ENCODE measurements at regions of chr11 and their contacts with region 1.

Region 1: DNA sequence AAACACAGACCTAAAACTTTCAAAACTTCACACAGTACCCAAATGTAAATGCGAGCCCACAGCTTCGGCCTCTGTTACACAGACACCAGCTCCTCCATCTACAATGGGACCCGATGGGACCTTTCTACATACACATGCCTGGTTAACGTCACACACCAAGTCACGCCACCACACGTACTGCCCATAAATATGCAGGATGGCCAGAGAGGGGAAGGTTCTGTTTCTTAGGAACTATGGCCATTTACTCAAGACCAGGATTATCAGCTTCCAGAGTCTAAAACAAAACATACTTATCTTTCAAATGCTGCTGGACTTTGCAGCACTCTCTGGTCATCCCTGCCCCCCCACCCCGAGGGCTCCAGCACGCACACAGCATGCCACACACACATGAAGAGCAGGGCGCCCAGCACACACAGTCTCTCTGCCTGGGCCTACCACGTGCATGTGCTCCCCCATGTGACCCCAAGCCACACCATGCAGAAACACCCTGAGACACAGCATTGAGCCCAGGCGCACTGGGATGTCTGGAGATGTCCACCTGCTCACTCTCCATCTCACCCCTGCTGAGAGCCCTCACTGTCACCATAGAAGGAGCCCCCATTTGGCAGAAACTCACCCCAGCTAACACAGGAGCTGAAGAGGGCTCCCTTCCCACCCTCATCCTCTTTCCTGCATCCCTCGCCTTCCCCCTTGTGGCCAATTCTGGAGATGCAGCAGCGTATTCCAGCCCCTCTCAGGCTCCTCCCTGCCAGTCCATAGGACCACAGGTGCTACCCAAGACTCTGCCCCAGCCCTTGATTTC is 61.8 kb downstream of the SLC22A12 start:
- DNase-seq: peak; percentile 75 to 92 (median 90)
- ATAC-seq: peak; percentile 72 to 77
- H3K4me3 ChIP-seq: no peak overlapping the region
- H3K27ac ChIP-seq: no peak overlapping the region
- H3K4me1 ChIP-seq: no peaks in the 10 kb centered on the region
- H3K27me3 ChIP-seq: no peaks in the 10 kb centered on the region

Region 2: DNA sequence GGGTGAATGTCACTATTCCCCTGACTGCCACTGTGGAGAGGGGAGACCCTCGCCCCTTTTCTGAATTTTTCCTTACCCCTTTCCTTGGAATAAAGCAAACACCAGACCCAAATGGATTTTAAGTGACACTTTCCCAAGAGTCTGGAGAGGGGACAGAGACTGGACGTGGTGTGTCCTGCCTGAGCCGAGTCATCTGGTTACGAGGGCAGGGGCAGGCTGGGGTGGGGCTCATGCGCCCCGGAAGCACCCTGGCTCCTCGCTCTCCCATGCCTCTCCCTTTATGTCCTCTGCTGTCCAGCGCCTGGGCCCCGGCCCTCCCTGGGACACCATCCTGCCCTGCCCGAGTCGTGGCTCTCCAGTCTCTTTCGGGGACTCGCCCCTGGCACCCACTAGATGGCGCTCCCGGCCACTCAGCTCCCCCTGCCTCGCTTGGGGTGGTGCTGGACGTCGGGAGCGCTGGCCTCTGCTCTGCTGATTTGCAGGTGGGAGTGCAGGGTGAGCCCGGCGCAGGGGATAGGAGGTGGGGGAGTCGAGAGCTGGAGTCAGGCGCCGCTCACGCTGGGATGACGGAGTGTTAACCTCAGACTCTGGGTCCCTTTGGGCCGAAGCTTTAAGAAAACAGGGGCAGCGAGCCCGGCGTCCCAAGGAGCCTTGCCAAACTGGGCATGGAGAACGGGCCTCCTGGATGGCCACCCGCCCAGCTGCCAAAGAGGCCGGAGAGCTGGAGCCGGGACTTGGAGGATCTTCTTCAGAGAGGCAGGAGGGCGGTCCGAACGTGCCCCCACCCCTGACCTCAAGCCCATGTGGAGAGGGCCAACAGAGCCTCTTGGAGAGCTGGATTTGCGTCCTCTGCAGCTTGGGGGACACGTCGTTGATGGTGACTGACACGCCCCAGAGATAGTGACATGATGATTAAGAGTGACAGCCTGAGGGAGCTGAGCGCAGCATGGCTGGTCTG is 203.9 kb before region 1 on chr11:
- intact Hi-C with region 1: loop called (anchors 2 to 10 kb)
- DNase-seq: peak; percentile 83 to 94 (median 94)
- ATAC-seq: peak; percentile 95 to 97
- H3K4me3 ChIP-seq: no peak overlapping the region
- H3K27ac ChIP-seq: no peak overlapping the region
- H3K4me1 ChIP-seq: no peaks in the 10 kb centered on the region
- H3K27me3 ChIP-seq: no peaks in the 10 kb centered on the region

Region 3: DNA sequence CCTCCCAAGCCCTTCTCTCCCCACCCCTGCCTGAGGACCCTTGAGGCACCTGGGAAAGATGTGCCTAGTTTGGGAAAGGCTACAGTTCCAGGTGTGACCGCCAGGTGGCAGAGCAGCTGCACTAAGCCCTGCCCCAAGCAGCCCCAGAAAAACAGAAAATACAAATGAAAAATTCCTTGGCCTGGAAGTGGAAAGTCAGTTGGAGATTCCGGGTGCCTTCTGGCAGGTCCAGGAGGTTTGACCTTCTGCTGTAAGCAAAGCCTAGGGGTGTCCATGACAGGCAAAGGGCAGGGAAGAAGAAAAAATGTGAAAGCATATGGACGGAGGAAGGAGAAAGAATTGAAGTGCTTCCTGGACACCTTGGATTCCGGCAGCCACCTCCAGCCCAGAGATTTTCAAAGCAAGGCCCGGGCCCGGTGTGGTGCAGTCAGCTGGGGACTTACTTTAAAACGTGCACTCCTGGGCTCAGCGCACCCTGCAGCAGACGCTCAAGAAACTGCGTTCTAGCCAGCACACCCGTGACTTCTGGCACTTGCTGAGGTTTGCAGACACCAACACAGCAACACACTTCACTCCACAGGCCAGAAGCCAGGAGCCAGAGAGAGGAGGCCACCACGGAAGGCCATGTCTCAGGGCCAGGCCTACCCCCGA is 99.1 kb before region 1 on chr11:
- intact Hi-C with region 1: loop called in 2 of 4 experiments (anchors 5 kb)
- DNase-seq: peak; percentile 64 to 89 (median 81)
- ATAC-seq: peak; percentile 64 to 70
- H3K4me3 ChIP-seq: no peak overlapping the region
- H3K27ac ChIP-seq: peak overlapping the region; percentile 22
- H3K4me1 ChIP-seq: no peaks in the 10 kb centered on the region
- H3K27me3 ChIP-seq: no peaks in the 10 kb centered on the region

Region 4: DNA sequence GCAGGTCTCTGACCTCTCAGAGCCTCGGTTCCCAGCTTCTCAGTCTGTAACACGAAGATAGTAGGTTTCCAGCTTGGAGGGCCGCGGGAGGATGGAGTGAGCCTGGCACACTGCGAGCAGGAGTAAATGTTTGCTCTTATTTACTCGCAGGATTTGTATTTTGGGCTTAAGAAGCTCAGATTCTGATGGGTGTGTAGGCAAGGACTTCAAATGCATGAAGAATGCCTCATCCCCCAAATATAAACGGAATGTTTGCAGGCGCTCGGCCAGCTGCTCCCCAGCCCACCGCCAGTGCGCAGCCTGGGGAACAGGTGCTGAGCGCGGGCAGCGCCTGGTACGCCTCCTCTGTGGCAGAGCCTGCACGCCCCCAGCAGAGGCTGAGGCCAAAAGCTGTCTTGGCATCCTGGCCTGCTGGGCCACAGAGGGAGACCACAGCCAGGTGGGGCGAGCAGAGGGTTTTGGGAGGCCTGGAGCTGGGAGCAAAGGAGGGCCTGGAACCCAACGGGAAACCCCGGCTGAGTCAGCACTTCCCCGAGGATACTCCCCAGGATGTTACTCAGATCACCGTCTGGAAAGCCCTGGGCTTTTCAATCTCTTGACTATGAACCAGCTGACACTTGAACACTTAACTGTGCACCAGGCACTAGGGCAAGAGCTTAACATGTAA is 216.2 kb after region 1 on chr11:
- intact Hi-C with region 1: no loop called
- DNase-seq: peak; percentile 67 to 70 (median 69)
- ATAC-seq: peak in 1 of 2 donors; percentile 58
- H3K4me3 ChIP-seq: no peak overlapping the region
- H3K27ac ChIP-seq: peak overlapping the region; percentile 90
- H3K4me1 ChIP-seq: peaks cover 38% of the 10 kb centered on the region
- H3K27me3 ChIP-seq: no peaks in the 10 kb centered on the region

Measured in right cardiac atrium (tissue), 5 donors.